Panc1 (cell line): ENCODE measurements at regions of chr6 and their contacts with region 1.

Region 1: GRCh38 chr6:27146706-27147505 is 100.6 kb upstream of the PRSS16 start:
- DNase-seq: peak; percentile 100
- ATAC-seq: peak; percentile 85
- H3K4me3 ChIP-seq: peak overlapping the region; percentile 100
- H3K27ac ChIP-seq: peak overlapping the region; percentile 97
- H3K4me1 ChIP-seq: peaks cover 25% of the 10 kb centered on the region
- H3K27me3 ChIP-seq: no peaks in the 10 kb centered on the region
- CTCF ChIP-seq: no peak

Region 2: GRCh38 chr6:27066802-27067201 is 80.1 kb before region 1 on chr6:
- CTCF ChIA-PET with region 1: no interaction called
- POLR2A ChIA-PET with region 1: no interaction called
- in situ Hi-C with region 1: no loop called
- intact Hi-C with region 1: no loop called
- DNase-seq: no peak
- ATAC-seq: no peak
- H3K4me3 ChIP-seq: no peak overlapping the region
- H3K27ac ChIP-seq: no peak overlapping the region
- H3K4me1 ChIP-seq: no peaks in the 10 kb centered on the region
- H3K27me3 ChIP-seq: no peaks in the 10 kb centered on the region
- CTCF ChIP-seq: no peak

Region 3: DNA sequence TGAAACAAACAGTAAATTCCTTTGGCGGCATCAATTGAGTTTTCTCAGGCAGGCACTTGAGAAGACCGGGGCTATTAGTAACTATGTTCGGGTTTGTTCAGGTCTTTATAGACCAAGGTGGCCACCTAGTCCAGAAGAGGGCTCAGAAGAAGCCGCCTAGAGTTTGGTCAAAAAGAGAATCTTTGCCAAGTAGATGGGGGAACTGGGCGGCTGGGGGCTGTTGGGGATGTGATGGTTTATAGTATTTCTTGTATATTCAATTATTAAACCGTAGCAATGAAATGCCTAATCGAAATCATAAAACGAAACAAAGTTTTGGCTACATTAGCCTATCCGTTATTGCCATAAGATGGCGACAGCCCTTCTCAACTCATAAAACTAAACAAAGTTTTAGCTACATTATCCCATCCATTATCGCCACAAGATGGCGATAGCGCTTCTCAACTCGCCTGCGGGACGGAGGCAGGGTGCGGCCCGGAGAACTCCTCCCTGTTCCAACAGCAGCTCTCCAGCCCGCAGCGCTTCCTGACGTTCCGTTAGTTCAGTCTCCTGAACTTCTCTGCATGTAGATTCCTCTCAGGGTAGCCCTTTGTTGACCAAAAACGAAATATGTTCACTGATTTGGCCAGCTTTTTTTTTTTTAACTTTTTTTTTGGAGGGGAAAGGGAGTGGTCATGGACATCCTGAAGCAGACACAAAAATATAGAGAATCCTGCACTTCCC is 19.9 kb before region 1 on chr6:
- CTCF ChIA-PET with region 1: interaction called, 3 read pairs
- POLR2A ChIA-PET with region 1: interaction called, 88 read pairs
- in situ Hi-C with region 1: no loop called
- intact Hi-C with region 1: loop called (anchors 2 kb)
- DNase-seq: peak; percentile 92
- ATAC-seq: peak; percentile 86
- H3K4me3 ChIP-seq: peak overlapping the region; percentile 34 to 67
- H3K27ac ChIP-seq: peak overlapping the region; percentile 100
- H3K4me1 ChIP-seq: peaks cover 43% of the 10 kb centered on the region
- H3K27me3 ChIP-seq: no peaks in the 10 kb centered on the region
- CTCF ChIP-seq: peak; percentile 93

Region 4: GRCh38 chr6:27132532-27133280 is 14.2 kb before region 1 on chr6:
- CTCF ChIA-PET with region 1: no interaction called
- POLR2A ChIA-PET with region 1: interaction called, 88 read pairs
- in situ Hi-C with region 1: no loop called
- intact Hi-C with region 1: loop called (anchors 2 kb)
- DNase-seq: peak; percentile 100
- ATAC-seq: peak; percentile 84
- H3K4me3 ChIP-seq: peak overlapping the region; percentile 86 to 95
- H3K27ac ChIP-seq: peak overlapping the region; percentile 100
- H3K4me1 ChIP-seq: peaks cover 47% of the 10 kb centered on the region
- H3K27me3 ChIP-seq: no peaks in the 10 kb centered on the region
- CTCF ChIP-seq: no peak

Region 5: GRCh38 chr6:27303613-27304272 is 156.8 kb after region 1 on chr6:
- CTCF ChIA-PET with region 1: no interaction called
- POLR2A ChIA-PET with region 1: interaction called, 10 read pairs
- in situ Hi-C with region 1: no loop called
- intact Hi-C with region 1: no loop called
- DNase-seq: no peak
- ATAC-seq: peak; percentile 95
- H3K4me3 ChIP-seq: peak overlapping the region; percentile 7 to 14
- H3K27ac ChIP-seq: no peak overlapping the region
- H3K4me1 ChIP-seq: no peaks in the 10 kb centered on the region; the same call in 1 of the 2 replicates
- H3K27me3 ChIP-seq: no peaks in the 10 kb centered on the region; the same call in 1 of the 2 replicates
- CTCF ChIP-seq: no peak

Region 6: DNA sequence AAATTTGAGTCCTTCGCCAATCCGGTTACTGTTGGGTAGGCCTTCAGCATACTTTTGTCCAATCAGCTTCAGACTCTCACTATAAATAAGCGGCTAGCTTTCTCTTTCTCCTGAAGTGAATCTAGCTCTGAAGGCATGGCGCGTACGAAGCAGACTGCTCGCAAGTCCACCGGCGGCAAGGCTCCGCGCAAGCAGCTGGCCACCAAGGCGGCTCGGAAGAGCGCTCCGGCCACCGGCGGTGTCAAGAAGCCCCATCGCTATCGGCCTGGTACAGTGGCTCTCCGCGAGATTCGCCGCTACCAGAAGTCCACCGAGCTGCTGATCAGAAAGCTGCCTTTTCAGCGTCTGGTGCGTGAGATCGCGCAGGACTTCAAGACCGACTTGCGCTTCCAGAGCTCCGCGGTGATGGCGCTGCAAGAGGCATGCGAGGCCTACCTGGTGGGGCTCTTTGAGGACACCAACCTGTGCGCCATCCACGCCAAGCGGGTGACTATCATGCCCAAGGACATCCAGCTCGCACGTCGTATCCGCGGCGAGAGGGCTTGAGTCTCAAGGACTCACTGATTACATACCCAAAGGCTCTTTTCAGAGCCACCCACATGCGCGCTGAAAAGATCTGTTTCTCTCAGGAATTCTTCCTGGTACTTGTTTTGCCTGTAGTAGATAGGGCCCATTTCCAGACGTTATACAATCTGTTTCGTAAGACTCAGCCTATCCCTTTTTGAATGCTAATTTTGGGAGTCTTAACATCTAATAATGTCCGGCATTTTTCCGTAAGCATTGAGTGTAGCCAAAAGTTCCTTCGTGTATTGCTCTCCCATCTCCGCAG is 663.2 kb after region 1 on chr6:
- CTCF ChIA-PET with region 1: no interaction called
- POLR2A ChIA-PET with region 1: interaction called, 18 read pairs
- in situ Hi-C with region 1: no loop called
- intact Hi-C with region 1: no loop called
- DNase-seq: peak; percentile 96
- ATAC-seq: peak; percentile 44
- H3K4me3 ChIP-seq: peak overlapping the region; percentile 78 to 93
- H3K27ac ChIP-seq: peak overlapping the region; percentile 100
- H3K4me1 ChIP-seq: peaks cover 17% of the 10 kb centered on the region
- H3K27me3 ChIP-seq: no peaks in the 10 kb centered on the region
- CTCF ChIP-seq: no peak